AG04450 (cell line): ENCODE measurements at regions of chr5 and their contacts with region 1.

Region 1: DNA sequence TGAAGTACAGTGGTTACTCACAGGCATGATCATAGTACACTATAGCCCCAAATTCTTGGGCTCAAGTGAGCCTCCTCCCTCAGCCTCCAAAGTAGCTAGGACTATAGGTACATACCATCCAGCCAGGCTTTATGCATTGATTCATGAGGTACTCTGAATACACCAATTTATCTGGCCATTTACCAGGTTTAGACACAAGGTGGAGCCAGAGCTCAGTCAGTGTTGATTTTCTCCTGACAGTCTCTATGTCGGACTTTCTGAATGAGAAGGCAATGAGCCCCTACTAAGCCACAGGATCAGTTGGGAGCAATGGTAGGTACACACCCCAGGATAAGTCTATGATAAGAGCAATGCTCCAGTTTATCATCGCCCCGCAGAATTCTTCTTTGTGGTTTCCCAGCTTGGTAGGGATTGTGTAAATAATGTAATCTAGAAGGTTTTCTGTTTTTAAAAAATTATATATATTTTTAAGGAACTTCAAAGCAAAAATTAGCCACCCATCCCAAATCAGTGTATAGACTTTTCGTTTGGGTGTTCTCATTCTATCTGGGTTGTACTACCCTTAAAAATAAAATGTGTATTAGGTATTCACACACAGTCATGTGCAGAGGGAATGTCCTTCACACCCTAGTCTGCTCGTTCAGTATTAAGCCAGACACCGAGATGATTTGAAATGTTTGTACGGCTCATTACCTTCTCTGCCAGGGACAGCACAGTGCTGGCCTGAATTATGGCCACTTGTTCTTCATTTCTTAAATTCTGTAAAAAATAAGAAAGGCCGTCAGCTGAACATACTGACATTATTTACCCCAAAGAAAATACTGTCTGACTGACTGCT is 118.4 kb upstream of the DPYSL3 start:
- DNase-seq: peak; percentile 23
- H3K4me3 ChIP-seq: no peak overlapping the region
- H3K27ac ChIP-seq: no peak overlapping the region
- H3K27me3 ChIP-seq: no peaks in the 10 kb centered on the region
- CTCF ChIP-seq: peak; percentile 85

Region 2: GRCh38 chr5:147617191-147617606 is 11.1 kb before region 1 on chr5:
- CTCF ChIA-PET with region 1: interaction called, 24 read pairs
- POLR2A ChIA-PET with region 1: no interaction called
- DNase-seq: no peak
- H3K4me3 ChIP-seq: no peak overlapping the region
- H3K27ac ChIP-seq: no peak overlapping the region
- H3K27me3 ChIP-seq: peaks cover 3% of the 10 kb centered on the region
- CTCF ChIP-seq: no peak

Region 3: GRCh38 chr5:147822686-147823491 is 194.6 kb after region 1 on chr5:
- CTCF ChIA-PET with region 1: interaction called, 96 read pairs
- POLR2A ChIA-PET with region 1: no interaction called
- DNase-seq: peak; percentile 7
- H3K4me3 ChIP-seq: no peak overlapping the region
- H3K27ac ChIP-seq: no peak overlapping the region
- H3K27me3 ChIP-seq: peaks cover 4% of the 10 kb centered on the region
- CTCF ChIP-seq: peak; percentile 90

Region 4: GRCh38 chr5:147935032-147935431 is 306.8 kb after region 1 on chr5:
- CTCF ChIA-PET with region 1: interaction called, 17 read pairs
- POLR2A ChIA-PET with region 1: no interaction called
- DNase-seq: no peak
- H3K4me3 ChIP-seq: no peak overlapping the region
- H3K27ac ChIP-seq: no peak overlapping the region
- H3K27me3 ChIP-seq: no peaks in the 10 kb centered on the region
- CTCF ChIP-seq: peak; percentile 41